ENCODE measurements at regions of chr15 and their contacts with region 1.

Region 1: DNA sequence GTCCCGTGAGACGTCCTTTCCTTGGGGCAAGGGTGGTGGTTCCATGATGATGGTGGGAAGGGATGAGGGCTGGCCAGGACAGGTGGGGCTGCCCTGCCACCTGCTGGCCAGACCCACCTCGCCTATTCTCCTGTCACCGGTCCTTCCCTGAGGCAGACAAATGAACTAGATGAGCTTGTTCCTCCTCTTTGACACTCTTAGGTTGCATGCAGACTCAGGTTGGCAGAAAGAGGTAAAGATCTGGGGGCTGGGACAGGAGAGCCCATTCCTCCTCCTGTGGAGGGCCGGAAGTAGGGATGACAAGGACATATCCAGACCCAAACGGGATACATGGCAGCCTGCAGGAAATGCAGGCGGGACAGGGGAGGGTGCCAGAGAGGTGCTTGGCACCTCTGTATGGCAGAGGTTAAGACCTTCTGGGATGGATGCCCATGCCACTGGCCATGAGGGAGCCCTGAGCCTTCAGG is 38.6 kb downstream of the ACSBG1 start:
- DNase-seq: peak in 1 of 2 donors; percentile 70
- ATAC-seq: no peak
- H3K4me3 ChIP-seq: no peak overlapping the region
- H3K27ac ChIP-seq: no peak overlapping the region
- H3K4me1 ChIP-seq: no peaks in the 10 kb centered on the region
- H3K27me3 ChIP-seq: no peaks in the 10 kb centered on the region

Region 2: GRCh38 chr15:77966540-77967290 is 229.1 kb before region 1 on chr15:
- intact Hi-C with region 1: loop called in 1 of 2 experiments (anchors 10 kb)
- DNase-seq: no peak
- ATAC-seq: peak; percentile 90
- H3K4me3 ChIP-seq: no peak overlapping the region
- H3K27ac ChIP-seq: no peak overlapping the region
- H3K4me1 ChIP-seq: no peaks in the 10 kb centered on the region
- H3K27me3 ChIP-seq: no peaks in the 10 kb centered on the region

Region 3: GRCh38 chr15:78056714-78057269 is 139.0 kb before region 1 on chr15:
- intact Hi-C with region 1: no loop called
- DNase-seq: peak in 1 of 2 donors; percentile 64
- ATAC-seq: peak; percentile 59
- H3K4me3 ChIP-seq: no peak overlapping the region
- H3K27ac ChIP-seq: peak overlapping the region in 1 of 2 donors; percentile 56
- H3K4me1 ChIP-seq: no peaks in the 10 kb centered on the region
- H3K27me3 ChIP-seq: no peaks in the 10 kb centered on the region

Region 4: GRCh38 chr15:78131295-78132061 is 64.3 kb before region 1 on chr15 and contains the start of gene CIB2:
- intact Hi-C with region 1: loop called in 1 of 2 experiments (anchors 5 kb)
- DNase-seq: peak; percentile 77 to 91
- ATAC-seq: peak; percentile 91
- H3K4me3 ChIP-seq: peak within 1 kb of the TSS; percentile 49 to 60
- H3K27ac ChIP-seq: peak within 1 kb of the TSS in 1 of 2 donors; percentile 9
- H3K4me1 ChIP-seq: no peaks in the 10 kb centered on the region
- H3K27me3 ChIP-seq: no peaks in the 10 kb centered on the region
- total RNA-seq, gene CIB2: 6.3 to 6.9 TPM